Activated CD4-positive, alpha-beta T cell treated with anti-CD3 and anti-CD28 coated beads, Interleukin-2, amount 10 ng/mL, durations not matched to agents 24 days and 14 days (primary cell): ENCODE measurements at regions of chr18 and their contacts with region 1.

Region 1: DNA sequence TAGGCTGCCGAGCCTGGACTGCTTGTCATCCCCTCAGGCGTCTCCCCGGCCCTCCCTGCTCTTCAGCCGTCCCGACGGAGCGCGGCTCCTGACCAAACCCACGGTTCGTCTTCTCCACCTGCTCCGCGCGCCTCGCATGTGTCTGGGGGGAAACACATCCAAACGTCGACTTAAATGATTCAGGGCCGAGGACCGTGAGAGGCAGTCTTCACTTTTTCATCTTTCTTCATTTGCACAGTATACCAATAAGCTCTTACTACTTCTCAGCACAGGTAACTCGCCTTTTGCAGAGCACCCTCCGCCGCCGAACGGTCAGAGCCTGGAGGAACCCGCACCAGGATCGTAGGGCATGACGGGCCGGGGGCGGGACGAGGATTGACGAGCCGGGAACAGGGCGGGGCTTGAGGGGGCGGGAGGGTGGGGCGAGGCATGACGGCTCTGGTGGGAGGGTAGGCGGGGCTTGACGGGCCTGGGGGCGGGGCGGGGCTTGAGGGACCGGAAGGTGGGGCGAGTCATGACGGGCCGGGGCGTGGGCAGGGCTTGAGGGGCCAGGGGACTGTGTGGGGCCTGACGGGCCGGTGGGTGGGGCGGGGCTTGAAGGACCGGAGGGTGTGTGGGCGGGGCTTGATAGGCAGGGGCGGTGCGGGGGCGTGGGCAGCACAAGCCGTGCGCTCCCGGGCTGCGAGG is at the start of gene SEH1L:
- DNase-seq: peak; percentile 99
- H3K4me3 Mint-ChIP-seq: peak within 1 kb of the TSS; percentile 92
- H3K27ac Mint-ChIP-seq: peak within 1 kb of the TSS; percentile 97
- H3K4me1 Mint-ChIP-seq: peaks cover 27% of the 10 kb centered on the region
- H3K27me3 Mint-ChIP-seq: no peaks in the 10 kb centered on the region
- total RNA-seq, gene SEH1L: 132 TPM in 2 replicates

Region 2: DNA sequence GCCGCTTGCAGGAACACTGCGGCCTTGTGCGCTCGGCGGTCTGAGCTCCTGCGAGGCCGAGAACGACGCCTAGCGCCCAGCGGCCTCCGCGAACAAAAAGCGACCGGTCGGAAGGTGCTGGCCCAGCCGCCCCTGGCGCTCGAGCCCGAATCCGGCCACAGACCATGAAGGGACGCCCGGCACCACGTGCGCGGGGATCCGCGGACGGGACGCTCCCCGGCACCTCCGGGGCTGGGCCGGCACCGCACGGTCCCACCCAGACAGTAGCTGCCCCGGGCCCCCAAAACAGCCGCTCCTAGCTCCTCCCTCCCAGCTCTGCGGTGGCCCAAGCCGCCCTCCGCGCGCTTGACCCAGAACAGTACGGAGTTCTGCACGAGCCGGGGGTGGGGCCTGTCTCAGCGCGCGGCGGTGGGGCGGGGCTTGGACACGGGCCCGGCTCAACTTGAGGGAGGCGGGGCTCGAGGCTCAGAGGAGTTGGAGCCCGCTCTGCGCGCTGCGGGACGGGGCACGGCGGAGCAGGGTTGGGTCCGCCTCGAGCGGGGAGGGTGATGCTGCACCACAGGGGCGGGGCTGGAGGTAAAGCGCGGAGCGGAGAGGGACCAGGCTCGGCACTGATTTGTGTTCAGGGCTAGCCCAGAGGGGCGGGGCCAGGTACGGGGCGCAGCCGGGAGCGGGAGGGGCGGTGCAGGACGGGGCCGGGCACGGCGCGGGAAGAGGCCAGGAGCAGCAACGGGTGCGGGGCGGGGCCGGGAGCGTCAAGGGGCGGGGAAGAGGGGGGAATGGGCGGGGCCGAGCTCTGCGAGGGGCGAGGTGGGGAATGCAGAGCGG is 966.7 kb before region 1 on chr18:
- intact Hi-C with region 1: loop called (anchors 5 kb)
- DNase-seq: peak; percentile 99
- H3K4me3 Mint-ChIP-seq: peak overlapping the region; percentile 91
- H3K27ac Mint-ChIP-seq: peak overlapping the region; percentile 89
- H3K4me1 Mint-ChIP-seq: peaks cover 17% of the 10 kb centered on the region
- H3K27me3 Mint-ChIP-seq: peaks cover 10% of the 10 kb centered on the region

Region 3: GRCh38 chr18:12702221-12703095 is 245.0 kb before region 1 on chr18 and contains the starts of genes CEP76 and PSMG2:
- intact Hi-C with region 1: loop called (anchors 1 kb)
- DNase-seq: peak; percentile 96
- H3K4me3 Mint-ChIP-seq: peak within 1 kb of the TSS; percentile 97
- H3K27ac Mint-ChIP-seq: peak within 1 kb of the TSS; percentile 97
- H3K4me1 Mint-ChIP-seq: peaks cover 36% of the 10 kb centered on the region
- H3K27me3 Mint-ChIP-seq: no peaks in the 10 kb centered on the region
- total RNA-seq, gene CEP76: 14.4 and 16.3 TPM in 2 replicates
- total RNA-seq, gene PSMG2: 109 and 111 TPM in 2 replicates

Region 4: DNA sequence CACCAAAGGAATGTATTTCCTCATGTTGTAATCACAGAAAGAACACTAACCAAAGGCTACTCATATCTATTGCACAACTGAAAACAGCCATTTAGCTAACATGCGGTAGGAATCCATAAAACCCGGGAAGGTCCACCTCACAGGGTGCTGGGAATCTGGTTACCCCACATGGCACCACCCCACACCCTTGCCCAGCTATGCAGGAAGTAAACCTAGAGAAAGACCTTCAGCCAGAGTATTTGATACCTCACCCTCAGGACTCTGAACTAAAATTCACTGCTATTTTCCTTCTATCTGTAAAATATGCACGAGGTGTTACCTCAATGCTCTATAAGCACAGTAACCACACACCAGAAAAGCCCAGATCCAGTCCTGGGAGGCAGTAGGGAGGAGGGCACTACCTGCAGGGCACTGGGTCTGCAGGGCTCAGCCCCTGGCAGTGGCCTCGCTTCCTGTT is 109.3 kb before region 1 on chr18:
- intact Hi-C with region 1: loop called (anchors 5 kb)
- DNase-seq: peak; percentile 74
- H3K4me3 Mint-ChIP-seq: peak overlapping the region; percentile 84
- H3K27ac Mint-ChIP-seq: peak overlapping the region; percentile 89
- H3K4me1 Mint-ChIP-seq: peaks cover 51% of the 10 kb centered on the region
- H3K27me3 Mint-ChIP-seq: no peaks in the 10 kb centered on the region

Region 5: DNA sequence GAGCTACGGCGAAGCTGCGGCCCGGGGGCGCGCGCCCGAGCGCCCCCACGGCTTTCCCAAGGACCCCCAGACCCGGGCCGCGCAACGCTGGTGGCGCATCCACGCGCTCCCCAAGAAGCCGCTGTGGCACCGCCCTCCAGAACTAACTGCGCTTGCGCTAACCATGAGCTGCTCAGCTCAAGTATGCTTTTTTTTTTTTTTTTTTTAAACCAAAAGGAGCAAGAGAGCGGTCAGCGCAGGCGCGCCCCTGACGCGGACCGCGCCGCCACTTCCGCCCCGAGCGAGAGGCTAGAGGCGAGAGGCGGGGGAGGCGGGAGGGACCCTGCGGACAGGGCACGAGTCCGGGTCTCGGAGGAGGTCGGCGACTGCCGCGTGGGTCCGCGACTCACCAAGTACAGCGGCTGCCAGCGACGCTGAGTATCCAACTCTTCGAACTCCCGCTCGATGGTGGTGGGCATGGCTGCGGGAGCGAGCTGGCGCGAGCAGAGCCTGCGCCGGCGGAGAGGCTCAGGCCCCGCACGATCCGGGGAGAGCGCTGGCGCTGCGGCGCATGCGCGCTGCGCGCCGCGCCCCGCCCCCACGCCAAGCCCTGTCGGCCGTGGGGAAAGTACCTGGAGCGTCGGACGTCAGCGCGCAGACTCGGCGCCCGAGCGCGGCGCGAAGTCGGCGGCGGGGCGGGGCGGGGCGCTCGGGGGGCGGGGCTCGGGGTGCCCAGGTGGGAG is 63.7 kb before region 1 on chr18 and contains the start of gene PTPN2:
- intact Hi-C with region 1: loop called (anchors 1 kb)
- DNase-seq: peak; percentile 97
- H3K4me3 Mint-ChIP-seq: peak within 1 kb of the TSS; percentile 90
- H3K27ac Mint-ChIP-seq: peak within 1 kb of the TSS; percentile 94
- H3K4me1 Mint-ChIP-seq: peaks cover 57% of the 10 kb centered on the region
- H3K27me3 Mint-ChIP-seq: no peaks in the 10 kb centered on the region
- total RNA-seq, gene PTPN2: 68.8 and 72.5 TPM in 2 replicates

Region 6: DNA sequence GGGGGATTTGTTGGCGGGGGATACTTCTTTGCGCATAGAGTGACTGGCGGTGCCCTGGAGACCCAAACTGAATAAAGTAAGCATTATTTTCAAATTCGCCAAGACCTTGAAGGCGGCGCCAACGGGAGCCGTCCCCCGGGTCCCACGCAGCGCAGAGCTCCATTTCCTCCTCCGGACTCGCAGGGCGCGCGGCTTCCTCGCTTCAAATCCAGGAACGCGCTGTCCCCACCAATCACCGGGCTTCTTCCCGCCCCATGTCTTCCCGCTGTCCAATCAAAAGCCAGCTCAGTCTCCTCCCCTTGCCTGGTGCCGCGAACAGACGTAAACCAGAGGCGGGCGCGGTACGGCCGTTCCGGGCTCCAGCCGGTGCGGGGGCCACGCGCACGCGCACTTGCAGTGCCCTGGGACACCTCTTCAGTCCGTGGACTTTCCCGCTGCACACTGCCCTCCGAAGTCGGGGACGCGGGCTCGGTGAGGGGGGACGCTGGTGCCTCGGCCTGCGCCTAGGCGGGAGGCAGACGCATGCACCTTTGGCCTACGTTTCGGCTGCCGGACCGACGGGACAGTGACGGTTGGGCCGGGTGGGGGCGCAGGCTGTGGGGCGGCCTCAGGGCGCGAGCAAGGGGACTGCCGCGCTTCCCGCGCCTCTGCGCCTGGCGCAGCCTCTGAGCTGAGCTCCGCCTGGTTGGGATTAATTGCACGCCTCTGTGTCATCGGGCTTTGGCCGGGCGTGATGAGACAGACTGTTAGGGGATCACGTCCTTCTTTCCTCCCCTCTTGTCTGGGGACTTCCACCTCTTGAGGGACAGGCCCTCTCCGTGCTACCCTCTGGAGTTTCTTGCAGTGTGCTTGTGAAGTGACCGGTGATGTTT is 43.7 kb after region 1 on chr18 and contains the start of gene CEP192:
- intact Hi-C with region 1: loop called (anchors 1 kb)
- DNase-seq: peak; percentile 99
- H3K4me3 Mint-ChIP-seq: peak within 1 kb of the TSS; percentile 94
- H3K27ac Mint-ChIP-seq: peak within 1 kb of the TSS; percentile 92
- H3K4me1 Mint-ChIP-seq: peaks cover 16% of the 10 kb centered on the region
- H3K27me3 Mint-ChIP-seq: no peaks in the 10 kb centered on the region
- total RNA-seq, gene CEP192: 31.4 and 34.7 TPM in 2 replicates

Region 7: DNA sequence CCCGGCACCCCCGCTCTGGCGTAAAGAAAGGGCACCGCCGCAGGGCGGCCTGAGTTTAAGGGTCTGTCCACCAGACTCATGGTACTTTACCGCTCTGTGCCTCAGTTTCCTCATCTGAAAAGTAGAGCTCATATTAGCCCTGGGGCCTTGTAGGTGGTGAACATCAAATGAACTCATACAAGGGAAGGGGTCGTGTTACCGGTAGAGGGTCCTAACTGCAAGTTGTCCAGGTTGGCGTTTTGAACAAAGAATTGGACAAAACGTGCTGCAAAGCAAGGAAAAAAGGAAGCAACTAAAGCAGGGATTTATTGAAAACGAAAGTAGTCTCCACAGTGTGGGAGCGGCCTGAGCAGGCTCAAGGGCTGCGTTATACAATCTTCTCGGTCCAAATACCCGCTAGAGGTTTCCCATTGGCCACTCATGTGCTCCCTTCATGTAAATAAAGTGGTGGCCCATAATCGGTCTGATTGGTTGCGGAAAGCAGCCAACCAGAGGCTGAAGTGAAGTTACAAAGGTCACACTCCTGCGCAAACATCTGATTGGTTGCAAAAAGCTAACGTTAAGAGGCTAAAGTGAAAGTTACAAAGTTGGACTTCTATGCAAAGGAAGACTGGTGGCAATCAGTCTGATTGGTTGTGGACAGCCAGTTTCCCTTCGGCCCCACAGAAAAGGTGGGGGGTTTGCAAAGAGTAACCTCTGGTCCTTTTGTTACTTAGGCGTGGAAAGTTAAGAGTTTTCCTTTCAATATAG is 190.3 kb after region 1 on chr18:
- intact Hi-C with region 1: loop called (anchors 5 kb)
- DNase-seq: peak; percentile 93
- H3K4me3 Mint-ChIP-seq: peak overlapping the region; percentile 99
- H3K27ac Mint-ChIP-seq: peak overlapping the region; percentile 93
- H3K4me1 Mint-ChIP-seq: peaks cover 15% of the 10 kb centered on the region
- H3K27me3 Mint-ChIP-seq: peaks cover 14% of the 10 kb centered on the region